Posterior cingulate gyrus (tissue), 11 donors: ENCODE measurements at regions of chr7 and their contacts with region 1.

Region 1: GRCh38 chr7:35985126-35985754 is 167.8 kb upstream of the EEPD1 start:
- DNase-seq: peak; percentile 70 to 98 (median 86)

Region 2: DNA sequence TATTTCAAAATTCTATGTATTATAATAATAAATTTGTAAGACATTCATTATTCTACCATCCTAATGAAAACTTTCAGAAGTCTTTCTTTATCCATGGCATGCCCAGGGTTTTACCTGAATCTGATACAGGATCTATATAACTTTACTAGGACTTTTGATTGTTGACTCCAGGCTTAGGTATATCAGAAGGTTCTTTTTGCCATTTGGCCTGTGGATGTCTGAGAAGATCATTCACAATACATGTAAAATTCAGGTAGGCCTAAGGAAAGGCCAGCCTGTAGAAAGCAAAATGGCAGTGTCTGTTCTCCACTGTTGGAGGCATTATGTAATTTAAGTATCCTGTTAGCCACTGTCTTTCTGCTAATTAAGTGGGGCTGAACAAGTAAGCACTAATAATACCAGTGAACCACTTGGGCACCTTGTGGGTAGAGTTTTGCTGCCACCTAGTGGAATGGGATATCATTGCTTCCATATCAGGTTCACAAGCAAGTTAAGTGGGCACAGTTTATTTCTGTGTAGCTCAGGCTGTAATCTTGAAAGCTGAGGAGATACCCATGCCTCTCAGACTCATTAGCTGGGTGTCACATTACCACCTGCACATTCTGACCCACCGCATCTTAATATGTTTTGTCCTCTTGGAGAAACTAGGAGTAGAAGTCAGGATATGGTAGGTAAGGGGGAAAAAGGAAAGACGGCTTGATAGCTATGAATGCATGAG is 78.9 kb before region 1 on chr7:
- intact Hi-C with region 1: no loop called
- DNase-seq: peak in 5 of 10 donors; percentile 51 to 90 (median 64)

Region 3: DNA sequence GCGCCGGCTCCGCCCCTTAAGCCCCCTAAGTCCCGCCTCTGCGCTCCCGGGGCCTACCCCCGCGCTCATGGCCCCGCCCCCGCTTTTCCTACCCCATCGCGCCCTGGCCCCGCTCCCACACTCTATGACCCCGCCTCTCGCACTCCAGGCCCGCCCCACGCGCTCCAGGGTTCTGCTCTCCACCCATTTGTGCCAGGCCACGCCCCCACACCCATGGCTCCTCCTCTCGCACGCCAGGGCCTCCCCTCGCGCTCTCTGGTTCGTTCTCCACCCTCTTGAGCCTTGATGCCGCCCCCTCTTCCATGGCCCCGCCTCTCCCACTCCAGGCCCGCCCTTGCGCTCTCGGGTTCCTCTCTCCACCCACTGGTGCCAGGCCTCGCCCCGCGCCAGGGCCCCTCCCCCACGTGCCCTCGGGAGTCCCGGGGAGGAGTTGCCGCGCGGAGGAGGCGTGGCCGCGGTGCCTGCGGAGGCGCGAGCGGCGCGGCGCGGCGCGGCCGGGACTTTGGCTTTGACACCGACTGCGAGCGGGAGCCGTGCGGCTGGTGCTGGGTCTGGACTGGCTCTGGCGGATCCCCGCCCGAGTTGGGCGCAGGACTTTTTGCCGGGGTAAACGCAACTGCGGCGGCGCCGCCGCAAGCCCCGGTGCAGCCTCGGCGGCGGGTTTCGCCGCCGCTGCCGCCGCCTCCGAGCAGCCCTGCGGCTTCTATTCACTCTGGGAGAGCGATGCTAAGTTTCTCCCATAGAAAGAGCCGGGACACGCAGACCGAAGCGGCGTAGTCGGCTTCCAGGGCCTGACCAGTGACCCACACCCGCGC is 167.7 kb after region 1 on chr7 and contains the start of gene EEPD1:
- intact Hi-C with region 1: loop called (anchors 2 kb)
- DNase-seq: peak; percentile 99 to 100 (median 100)

Region 4: GRCh38 chr7:36291387-36292316 is 306.4 kb after region 1 on chr7:
- intact Hi-C with region 1: loop called (anchors 1 kb)
- DNase-seq: peak; percentile 66 to 97 (median 88)

Region 5: DNA sequence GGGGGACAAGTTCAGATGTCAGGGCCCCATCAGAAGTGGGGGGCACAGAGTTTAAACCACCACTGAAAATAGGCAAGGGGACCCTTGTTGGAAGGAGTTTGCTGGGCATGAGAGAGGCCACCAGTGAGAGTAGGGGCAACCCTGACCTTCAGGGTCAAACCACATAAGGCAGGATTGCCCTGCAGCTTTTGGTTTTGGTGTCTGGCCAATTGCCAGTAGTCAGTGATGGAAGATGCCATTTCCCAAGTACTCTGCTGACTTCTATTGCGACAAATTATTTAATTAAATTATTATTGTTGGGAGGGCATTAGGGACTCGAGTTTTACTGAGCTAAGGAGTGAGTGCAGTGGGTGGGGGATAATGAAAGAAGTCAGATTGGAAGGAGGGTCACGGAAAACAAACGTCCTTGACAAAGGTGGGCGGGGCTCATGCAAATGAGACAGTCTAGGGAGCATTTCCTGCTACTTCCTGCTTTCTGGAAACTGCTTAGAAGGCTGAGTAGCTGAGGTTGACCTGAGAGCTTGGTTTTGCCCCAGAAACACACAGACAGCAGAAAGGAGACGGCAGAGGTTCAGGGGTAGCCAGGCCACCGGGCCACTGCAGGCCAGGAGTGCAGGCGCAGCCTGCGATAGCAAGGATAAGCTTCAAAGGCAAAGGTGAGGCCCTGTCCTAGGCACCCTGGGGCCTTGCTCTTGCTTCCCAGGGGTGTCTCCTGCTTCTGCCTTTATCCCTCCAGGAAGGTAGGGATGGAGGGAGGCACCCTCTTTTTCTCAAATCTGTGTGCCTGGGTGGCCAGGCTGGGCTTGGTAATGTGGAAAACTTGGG is 330.3 kb after region 1 on chr7:
- intact Hi-C with region 1: loop called (anchors 1 kb)
- DNase-seq: no peak